ENCODE measurements at regions of chr11 and their contacts with region 1.

Region 1: DNA sequence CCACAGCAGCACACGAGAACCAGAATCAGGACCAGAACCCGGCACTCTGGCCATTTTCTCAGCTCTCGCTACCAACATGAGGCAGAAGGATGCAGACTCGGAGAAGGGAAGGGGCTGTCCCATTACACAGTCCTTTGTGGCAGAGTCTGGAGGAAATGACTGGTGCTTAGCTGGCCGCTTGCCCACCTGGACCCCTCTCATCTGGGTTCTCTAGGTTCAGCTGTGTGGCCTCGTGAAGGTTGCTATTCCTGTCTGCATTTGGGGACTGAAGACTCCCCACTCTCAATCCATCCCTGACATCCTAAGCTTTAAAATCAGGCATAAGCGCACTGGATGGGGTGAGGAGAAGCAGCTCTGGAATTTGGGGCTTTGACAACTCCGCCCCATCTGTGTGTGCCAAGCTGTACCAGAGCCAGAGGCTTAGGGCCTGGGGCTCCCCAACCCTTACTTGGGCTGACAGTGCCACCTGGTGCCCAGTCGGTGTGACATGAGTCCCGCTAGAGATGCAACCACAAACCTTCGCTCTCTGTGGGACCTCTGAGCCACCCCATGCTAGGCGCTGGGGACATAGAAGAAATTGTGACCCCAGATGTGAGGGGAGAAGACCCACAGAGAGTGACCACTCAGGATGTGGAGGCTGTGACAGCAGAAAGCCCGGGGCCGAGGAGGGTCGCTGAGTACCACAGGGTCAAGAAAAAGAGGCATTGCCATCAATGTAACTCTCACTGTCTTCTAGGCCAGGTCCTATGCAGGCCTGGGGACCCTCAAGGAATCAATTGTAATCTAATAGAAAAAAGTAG is 35.9 kb upstream of the FCHSD2 start:
- DNase-seq: peak; percentile 65 to 87 (median 80)
- ATAC-seq: peak; percentile 100
- H3K4me3 ChIP-seq: no peak overlapping the region
- H3K4me3 Mint-ChIP-seq: no peak overlapping the region
- H3K27ac ChIP-seq: no peak overlapping the region
- H3K27ac Mint-ChIP-seq: no peak overlapping the region
- H3K4me1 ChIP-seq: no peaks in the 10 kb centered on the region
- H3K4me1 Mint-ChIP-seq: peaks cover 3% of the 10 kb centered on the region
- H3K27me3 ChIP-seq: no peaks in the 10 kb centered on the region
- H3K27me3 Mint-ChIP-seq: no peaks in the 10 kb centered on the region
- CTCF ChIP-seq: peak; percentile 80

Region 2: DNA sequence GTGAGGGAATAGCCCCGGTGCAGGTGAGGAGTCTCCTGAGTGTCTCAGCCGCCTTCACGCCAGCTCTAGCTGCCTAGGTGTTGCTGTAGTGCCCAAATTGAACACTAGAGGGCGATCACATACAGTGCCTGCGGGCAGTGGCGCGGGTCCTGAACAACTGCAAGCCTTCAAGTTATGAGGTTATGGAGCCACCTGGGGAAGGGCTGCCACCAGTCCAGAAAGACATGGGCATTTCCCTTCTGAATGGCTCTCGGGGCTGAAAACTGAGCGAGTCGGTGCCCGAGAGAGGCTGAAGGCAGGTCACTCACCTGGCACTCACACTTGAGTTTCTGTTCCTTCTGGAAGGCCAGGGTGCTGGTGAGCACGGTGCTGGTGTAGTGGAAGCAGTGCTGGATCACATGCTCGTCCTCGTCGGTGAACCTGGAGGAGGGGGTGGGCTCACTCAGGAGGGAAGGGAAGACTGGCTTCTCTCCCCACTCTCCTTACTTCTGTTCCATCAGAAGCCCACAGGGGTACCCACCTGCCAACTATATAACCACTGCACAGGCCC is 592.1 kb before region 1 on chr11:
- CTCF ChIA-PET with region 1: interaction called, 4 read pairs
- POLR2A ChIA-PET with region 1: no interaction called
- intact Hi-C with region 1: loop called (anchors 2 to 5 kb)
- DNase-seq: peak; percentile 25 to 86 (median 56)
- ATAC-seq: peak; percentile 80
- H3K4me3 ChIP-seq: peak overlapping the region in 1 of 2 experiments; percentile 36
- H3K4me3 Mint-ChIP-seq: peak overlapping the region; percentile 87
- H3K27ac ChIP-seq: no peak overlapping the region
- H3K27ac Mint-ChIP-seq: peak overlapping the region; percentile 39
- H3K4me1 ChIP-seq: peaks cover 29% of the 10 kb centered on the region
- H3K4me1 Mint-ChIP-seq: peaks cover 27% of the 10 kb centered on the region
- H3K27me3 ChIP-seq: peaks cover 5 to 9% of the 10 kb centered on the region in 2 experiments
- H3K27me3 Mint-ChIP-seq: peaks cover 30% of the 10 kb centered on the region
- CTCF ChIP-seq: peak; percentile 85

Region 3: DNA sequence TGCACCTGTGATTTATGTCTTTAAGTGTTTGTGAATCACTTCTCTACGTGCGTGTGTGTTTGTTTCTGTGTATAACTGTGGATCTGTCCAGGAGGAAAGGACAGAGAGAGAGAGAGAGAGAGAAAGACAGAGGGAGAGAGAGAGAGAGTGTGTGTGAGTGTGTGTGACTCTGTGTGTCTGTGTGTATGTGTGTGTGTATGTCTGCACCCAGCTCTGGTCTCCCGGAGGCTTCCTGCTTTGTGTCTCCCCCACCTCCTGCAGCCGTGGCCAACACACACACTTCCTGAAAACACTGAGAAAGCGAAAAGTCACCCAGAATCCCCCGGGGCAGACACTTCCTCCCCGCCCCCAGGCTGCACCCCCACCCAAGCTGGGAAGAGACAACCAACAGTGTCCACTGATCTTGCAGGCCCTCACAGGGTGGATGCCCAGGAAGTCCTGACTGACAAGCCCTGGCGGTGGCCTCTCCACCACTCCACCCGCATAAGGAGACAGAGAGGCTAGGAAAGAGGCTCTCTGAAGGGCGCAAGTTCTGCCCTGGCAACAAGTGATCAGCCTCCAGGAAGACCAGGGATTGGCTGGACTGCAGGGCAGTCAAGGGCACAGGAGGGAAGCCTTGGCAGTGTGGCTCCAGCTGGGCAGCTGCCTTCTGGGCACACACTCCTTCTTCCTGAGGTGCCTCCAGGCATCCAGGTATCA is 455.8 kb before region 1 on chr11:
- CTCF ChIA-PET with region 1: interaction called, 55 read pairs
- POLR2A ChIA-PET with region 1: interaction called, 5 read pairs
- intact Hi-C with region 1: loop called (anchors 1 kb)
- DNase-seq: peak; percentile 72 to 94 (median 87)
- ATAC-seq: peak; percentile 81
- H3K4me3 ChIP-seq: peak overlapping the region; percentile 77 to 89
- H3K4me3 Mint-ChIP-seq: peak overlapping the region; percentile 98
- H3K27ac ChIP-seq: peak overlapping the region; percentile 80 to 87
- H3K27ac Mint-ChIP-seq: peak overlapping the region; percentile 98
- H3K4me1 ChIP-seq: peaks cover 64% of the 10 kb centered on the region
- H3K4me1 Mint-ChIP-seq: peaks cover 65% of the 10 kb centered on the region
- H3K27me3 ChIP-seq: no peaks in the 10 kb centered on the region
- H3K27me3 Mint-ChIP-seq: no peaks in the 10 kb centered on the region
- CTCF ChIP-seq: no peak

Region 4: GRCh38 chr11:72848846-72849466 is 329.0 kb before region 1 on chr11:
- CTCF ChIA-PET with region 1: interaction called, 3 read pairs
- POLR2A ChIA-PET with region 1: no interaction called
- intact Hi-C with region 1: loop called in 1 of 2 experiments (anchors 1 kb)
- DNase-seq: peak in 5 of 9 experiments; percentile 29 to 67 (median 46)
- ATAC-seq: peak; percentile 71
- H3K4me3 ChIP-seq: no peak overlapping the region
- H3K4me3 Mint-ChIP-seq: no peak overlapping the region
- H3K27ac ChIP-seq: no peak overlapping the region
- H3K27ac Mint-ChIP-seq: no peak overlapping the region
- H3K4me1 ChIP-seq: no peaks in the 10 kb centered on the region
- H3K4me1 Mint-ChIP-seq: peaks cover 5% of the 10 kb centered on the region
- H3K27me3 ChIP-seq: no peaks in the 10 kb centered on the region
- H3K27me3 Mint-ChIP-seq: no peaks in the 10 kb centered on the region
- CTCF ChIP-seq: peak; percentile 61

Region 5: DNA sequence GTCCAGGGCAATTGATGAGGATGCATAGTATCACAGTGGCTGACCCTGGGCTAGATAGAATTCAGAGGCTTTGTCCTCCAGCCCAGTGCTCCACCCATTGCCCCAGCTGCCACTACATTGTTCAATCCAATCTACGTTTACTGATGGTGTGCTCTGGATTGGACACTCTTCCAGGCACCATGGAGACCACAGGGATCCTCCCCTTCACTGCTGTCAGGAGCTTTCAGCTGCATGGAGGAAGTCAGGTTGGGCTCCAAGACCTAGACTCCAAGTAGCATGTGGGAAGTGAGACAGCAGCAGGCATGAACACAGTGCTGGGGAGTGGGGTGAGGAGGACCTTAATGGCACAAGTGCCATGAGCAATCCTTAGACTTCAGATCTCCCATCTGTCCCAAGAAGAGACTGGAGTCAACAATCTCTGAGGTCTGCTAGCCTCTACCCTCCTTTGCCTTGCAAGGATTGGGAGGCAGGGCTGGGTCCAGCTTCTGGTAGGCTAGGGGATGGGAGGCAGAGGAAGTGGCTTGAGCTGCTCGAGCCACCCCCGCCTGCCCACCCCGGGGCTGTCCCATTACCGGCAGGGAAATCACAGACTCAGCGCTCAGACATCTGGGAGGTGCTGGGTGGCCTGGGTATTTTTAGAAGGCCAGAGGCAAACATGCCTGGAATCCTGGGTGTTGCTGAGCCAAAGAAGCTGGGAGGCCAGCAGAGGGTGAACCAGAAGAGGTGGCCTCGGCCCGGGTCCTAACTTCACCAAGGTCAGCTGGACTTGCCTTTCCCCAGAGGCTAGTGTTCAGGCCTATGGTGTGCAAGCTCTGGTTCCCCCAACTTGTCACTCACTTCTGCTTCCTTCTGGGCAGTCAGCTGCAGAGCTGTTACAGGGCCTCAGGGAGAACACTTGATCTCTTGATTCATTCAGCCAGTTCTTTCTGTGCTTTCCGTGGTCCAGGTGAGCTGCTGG is 20.6 kb before region 1 on chr11:
- CTCF ChIA-PET with region 1: interaction called, 111 read pairs
- POLR2A ChIA-PET with region 1: no interaction called
- intact Hi-C with region 1: no loop called
- DNase-seq: no peak
- ATAC-seq: no peak
- H3K4me3 ChIP-seq: no peak overlapping the region
- H3K4me3 Mint-ChIP-seq: no peak overlapping the region
- H3K27ac ChIP-seq: no peak overlapping the region
- H3K27ac Mint-ChIP-seq: no peak overlapping the region
- H3K4me1 ChIP-seq: peaks cover 50% of the 10 kb centered on the region
- H3K4me1 Mint-ChIP-seq: peaks cover 49% of the 10 kb centered on the region
- H3K27me3 ChIP-seq: no peaks in the 10 kb centered on the region
- H3K27me3 Mint-ChIP-seq: no peaks in the 10 kb centered on the region
- CTCF ChIP-seq: no peak

Region 6: GRCh38 chr11:73198677-73199076 is 20.7 kb after region 1 on chr11:
- CTCF ChIA-PET with region 1: no interaction called
- POLR2A ChIA-PET with region 1: no interaction called
- intact Hi-C with region 1: no loop called
- DNase-seq: no peak
- ATAC-seq: no peak
- H3K4me3 ChIP-seq: no peak overlapping the region
- H3K4me3 Mint-ChIP-seq: no peak overlapping the region
- H3K27ac ChIP-seq: no peak overlapping the region
- H3K27ac Mint-ChIP-seq: no peak overlapping the region
- H3K4me1 ChIP-seq: no peaks in the 10 kb centered on the region
- H3K4me1 Mint-ChIP-seq: no peaks in the 10 kb centered on the region
- H3K27me3 ChIP-seq: no peaks in the 10 kb centered on the region
- H3K27me3 Mint-ChIP-seq: peaks cover 5% of the 10 kb centered on the region
- CTCF ChIP-seq: no peak

Measured in CD8-positive, alpha-beta T cell (primary cell).